ENCODE measurements at regions of chr17 and their contacts with region 1.

Region 1: GRCh38 chr17:4086041-4086483 is 56.8 kb downstream of the ZZEF1 start:
- DNase-seq: no peak
- H3K4me3 ChIP-seq: no peak overlapping the region
- H3K27me3 ChIP-seq: no peaks in the 10 kb centered on the region
- CTCF ChIP-seq: no peak

Region 2: DNA sequence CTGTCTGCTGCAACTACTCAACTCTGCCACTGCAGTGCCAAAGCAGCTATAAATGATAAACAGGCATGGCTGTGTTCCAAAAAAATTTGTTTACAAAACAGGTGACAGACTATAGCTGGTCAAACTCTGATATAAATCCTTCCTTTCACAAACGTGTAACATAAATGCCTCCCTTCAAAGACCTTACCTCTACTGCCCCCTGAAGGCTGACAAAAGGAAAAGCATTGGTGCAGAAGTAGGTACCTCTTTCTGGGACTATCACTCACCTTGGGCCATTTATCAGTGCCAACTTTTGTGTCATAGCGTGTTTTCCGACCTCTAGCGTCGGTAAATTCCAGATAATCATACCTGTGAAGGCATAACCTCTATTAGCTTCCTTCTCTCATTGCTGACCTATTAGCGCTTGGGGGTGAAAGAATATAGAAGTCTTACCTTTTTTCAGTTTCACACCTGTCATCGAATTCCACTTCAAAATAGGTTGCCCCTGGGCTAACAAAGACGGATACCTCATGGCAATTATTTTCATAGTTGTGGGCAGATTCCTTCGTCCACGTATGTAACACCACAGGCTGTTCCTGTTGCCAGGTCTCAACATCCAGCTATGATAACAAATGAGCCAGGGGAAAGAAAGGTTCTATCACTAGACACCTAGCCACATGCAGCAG is 11.1 kb before region 1 on chr17:
- CTCF ChIA-PET with region 1: interaction called, 26 read pairs
- POLR2A ChIA-PET with region 1: no interaction called
- DNase-seq: no peak
- H3K4me3 ChIP-seq: no peak overlapping the region
- H3K27me3 ChIP-seq: no peaks in the 10 kb centered on the region
- CTCF ChIP-seq: peak; percentile 68